Right ventricle myocardium inferior (tissue), 1 donor: ENCODE measurements at regions of chr3 and their contacts with region 1.

Region 1: DNA sequence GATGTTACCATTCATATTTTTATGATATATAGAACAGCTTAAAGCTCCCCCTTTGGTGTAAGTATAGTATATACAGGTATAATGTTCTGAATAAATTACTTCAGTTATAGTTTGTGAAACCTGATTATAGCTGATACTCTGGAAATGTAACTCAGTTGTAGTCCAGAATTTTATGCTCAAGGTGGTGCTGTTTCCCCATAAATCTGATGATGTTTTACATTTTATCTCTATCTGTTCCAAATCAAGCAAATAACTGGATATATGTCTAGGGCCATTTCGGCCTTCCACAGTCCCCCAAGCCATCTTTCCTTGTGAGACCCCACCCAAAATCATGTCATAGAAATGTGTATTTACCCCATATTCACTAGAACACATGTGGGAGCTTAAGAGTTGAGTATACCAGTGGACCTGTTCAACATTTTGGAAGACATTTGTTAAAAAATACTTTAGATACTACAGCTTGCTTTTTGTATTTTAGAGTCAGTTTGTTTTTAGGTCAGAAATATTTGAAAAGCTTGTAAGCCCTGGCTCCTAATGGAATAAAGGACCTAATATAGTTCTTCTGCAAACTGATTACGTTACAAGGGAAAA is 107.1 kb downstream of the ATG7 start:
- DNase-seq: no peak
- ATAC-seq: peak; percentile 52

Region 2: DNA sequence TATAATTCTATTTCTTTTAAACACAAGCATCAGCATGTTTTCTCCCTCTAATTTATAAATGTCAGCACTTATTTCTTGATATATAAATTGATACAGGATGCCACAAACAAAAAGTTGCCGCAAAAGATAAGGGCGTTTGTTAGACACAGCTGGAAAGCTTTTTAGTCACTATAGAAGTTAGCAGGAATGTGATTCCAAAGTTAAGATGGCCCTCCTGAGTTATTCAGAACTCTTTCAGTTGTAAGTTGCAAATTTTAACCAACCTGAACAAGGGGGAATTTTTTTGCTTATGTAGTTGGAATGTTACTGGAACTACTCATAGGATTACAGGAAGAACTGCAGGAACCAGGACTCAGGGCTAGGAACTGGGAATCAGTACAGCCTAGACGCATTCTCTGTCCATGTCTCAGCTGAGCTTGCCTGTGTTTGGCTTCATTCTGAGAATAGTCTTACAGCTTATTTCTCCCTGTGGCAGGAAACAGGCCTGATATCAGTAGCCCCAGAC is 98.1 kb after region 1 on chr3:
- intact Hi-C with region 1: no loop called
- DNase-seq: no peak
- ATAC-seq: peak; percentile 29

Region 3: GRCh38 chr3:11803977-11804892 is 424.9 kb after region 1 on chr3:
- intact Hi-C with region 1: loop called (anchors 1 kb)
- DNase-seq: no peak
- ATAC-seq: no peak